Breast epithelium (tissue), 4 donors: ENCODE measurements at regions of chr2 and their contacts with region 1.

Region 1: GRCh38 chr2:52383541-52383940 is 1351.6 kb upstream of the NRXN1 start:
- DNase-seq: no peak
- H3K4me3 ChIP-seq: no peak overlapping the region
- H3K27ac ChIP-seq: no peak overlapping the region
- H3K4me1 ChIP-seq: no peaks in the 10 kb centered on the region
- H3K27me3 ChIP-seq: no peaks in the 10 kb centered on the region
- CTCF ChIP-seq: no peak
- POLR2A ChIP-seq: no peak

Region 2: DNA sequence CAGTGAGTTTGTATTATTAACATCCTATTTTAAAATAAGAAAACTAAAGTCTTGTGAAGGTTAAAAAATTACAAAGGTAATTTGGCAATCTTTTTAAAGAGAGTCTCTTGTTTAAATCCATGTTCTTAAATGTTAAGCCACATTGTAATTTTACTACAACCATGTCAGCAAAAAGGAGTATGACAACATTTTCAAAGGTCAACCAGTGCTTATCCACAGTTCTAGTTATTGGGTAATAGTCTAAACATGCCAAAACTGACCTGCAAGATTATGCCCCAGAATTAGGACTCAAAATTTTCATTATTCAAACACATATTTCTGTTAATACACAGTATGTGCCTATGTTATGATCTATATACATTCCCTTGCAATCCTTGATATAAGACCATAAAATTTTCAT is 71.4 kb after region 1 on chr2:
- intact Hi-C with region 1: loop called (anchors 2 kb)
- DNase-seq: no peak
- H3K4me3 ChIP-seq: no peak overlapping the region
- H3K27ac ChIP-seq: no peak overlapping the region
- H3K4me1 ChIP-seq: no peaks in the 10 kb centered on the region
- H3K27me3 ChIP-seq: no peaks in the 10 kb centered on the region
- CTCF ChIP-seq: no peak
- POLR2A ChIP-seq: no peak